HepG2 (cell line): ENCODE measurements at regions of chr4 and their contacts with region 1.

Region 1: GRCh38 chr4:76830964-76831703 is 66.8 kb downstream of the SOWAHB start:
- DNase-seq: peak; percentile 94
- ATAC-seq: peak; percentile 91
- H3K4me3 ChIP-seq: peak overlapping the region; percentile 77 to 81 (median 80)
- H3K27ac ChIP-seq: peak overlapping the region; percentile 92
- H3K4me1 ChIP-seq: peaks cover 21% of the 10 kb centered on the region
- H3K27me3 ChIP-seq: no peaks in the 10 kb centered on the region; a peak in 1 of 5 replicates
- CTCF ChIP-seq: no peak
- EP300 ChIP-seq: peak; percentile 2 to 81; a peak in 2 of 4 replicates
- POLR2A ChIP-seq: peak; percentile 75 to 91
- RAD21 ChIP-seq: no peak

Region 2: GRCh38 chr4:76809594-76810305 is 21.4 kb before region 1 on chr4:
- CTCF ChIA-PET with region 1: no interaction called
- POLR2A ChIA-PET with region 1: interaction called, 12 read pairs
- in situ Hi-C with region 1: no loop called
- intact Hi-C with region 1: no loop called
- DNase-seq: peak; percentile 70
- ATAC-seq: peak; percentile 98
- H3K4me3 ChIP-seq: peak overlapping the region in 1 of 3 experiments; percentile 32; a peak in 1 of 6 replicates
- H3K27ac ChIP-seq: no peak overlapping the region
- H3K4me1 ChIP-seq: peaks cover 18% of the 10 kb centered on the region
- H3K27me3 ChIP-seq: no peaks in the 10 kb centered on the region
- CTCF ChIP-seq: peak; percentile 62
- EP300 ChIP-seq: 0 out of 4 replicates have a peak, but pooled peaks of 1 of the 2 experiments have one; percentile 10
- POLR2A ChIP-seq: no peak
- RAD21 ChIP-seq: no peak